Esophagus squamous epithelium (tissue), 5 donors: ENCODE measurements at regions of chr7 and their contacts with region 1.

Region 1: DNA sequence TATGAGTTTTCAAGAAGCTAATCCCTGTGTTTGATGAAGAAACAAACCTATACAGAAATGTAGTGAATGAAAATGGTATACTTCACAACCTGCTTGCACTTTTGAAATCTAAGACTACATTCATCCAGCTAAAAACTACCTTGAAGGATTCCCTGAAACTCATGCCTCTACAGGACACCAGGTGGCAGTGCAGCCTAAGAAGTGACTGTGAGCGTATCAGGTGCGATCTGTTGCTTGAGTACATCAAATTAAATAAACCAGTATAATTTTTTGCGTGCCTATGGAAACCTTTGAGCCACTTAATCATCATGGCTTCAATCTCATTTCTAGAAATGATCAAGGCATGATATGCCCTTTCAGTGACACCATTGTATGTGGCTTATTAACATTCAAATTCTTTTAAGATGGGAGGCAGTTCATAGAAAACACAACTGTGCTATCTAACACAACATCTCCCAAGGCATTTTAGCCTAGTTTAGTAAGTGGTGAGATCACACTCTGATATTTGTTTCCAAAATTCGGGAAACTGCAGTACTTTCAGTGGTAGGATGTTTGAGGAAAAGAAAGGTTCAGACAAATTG is 57.4 kb downstream of the PPP1R17 start:
- DNase-seq: no peak
- H3K4me3 ChIP-seq: no peak overlapping the region
- H3K27ac ChIP-seq: no peak overlapping the region
- H3K4me1 ChIP-seq: no peaks in the 10 kb centered on the region
- H3K27me3 ChIP-seq: peaks cover 0 to 10% (median 0%) of the 10 kb centered on the region in 4 donors
- CTCF ChIP-seq: peak; percentile 71 to 88 (median 84)
- POLR2A ChIP-seq: no peak

Region 2: DNA sequence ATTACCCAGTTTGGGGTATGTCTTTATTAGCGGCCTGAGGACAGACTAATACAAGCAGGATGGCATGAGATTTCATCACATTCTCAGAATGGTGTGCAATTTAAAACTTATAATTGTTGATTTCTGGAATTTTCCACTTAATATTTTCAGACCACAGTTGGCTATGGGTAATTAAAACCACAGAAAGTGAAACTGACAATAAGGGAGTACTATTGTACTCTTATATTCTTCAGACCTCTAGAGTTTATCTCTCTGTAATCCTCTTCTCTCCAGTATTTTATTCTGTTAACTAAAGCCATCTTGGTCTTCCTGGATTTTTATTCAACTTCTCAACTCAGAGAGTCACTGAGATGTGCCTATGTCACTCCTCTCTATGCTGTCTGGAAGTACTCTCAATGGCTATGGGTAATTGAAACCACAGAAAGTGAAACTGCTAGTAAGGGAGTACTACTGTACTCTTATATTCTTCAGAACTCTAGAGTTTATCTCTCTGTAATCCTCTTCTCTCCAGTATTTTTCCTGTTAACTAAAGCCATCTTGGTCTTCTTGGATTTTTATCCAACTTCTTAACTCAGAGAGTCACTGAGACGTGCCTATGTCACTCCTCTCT is 60.9 kb after region 1 on chr7:
- intact Hi-C with region 1: no loop called
- DNase-seq: no peak
- H3K4me3 ChIP-seq: no peak overlapping the region
- H3K27ac ChIP-seq: no peak overlapping the region
- H3K4me1 ChIP-seq: no peaks in the 10 kb centered on the region
- H3K27me3 ChIP-seq: no peaks in the 10 kb centered on the region
- CTCF ChIP-seq: no peak
- POLR2A ChIP-seq: no peak

Region 3: GRCh38 chr7:31919678-31920369 is 175.4 kb after region 1 on chr7:
- intact Hi-C with region 1: no loop called
- DNase-seq: no peak
- H3K4me3 ChIP-seq: no peak overlapping the region
- H3K27ac ChIP-seq: no peak overlapping the region
- H3K4me1 ChIP-seq: no peaks in the 10 kb centered on the region
- H3K27me3 ChIP-seq: no peaks in the 10 kb centered on the region
- CTCF ChIP-seq: no peak
- POLR2A ChIP-seq: no peak

Region 4: GRCh38 chr7:32204361-32205018 is 460.1 kb after region 1 on chr7:
- intact Hi-C with region 1: loop called (anchors 5 kb)
- DNase-seq: no peak
- H3K4me3 ChIP-seq: peak overlapping the region in 3 of 4 donors; percentile 13 to 56 (median 28)
- H3K27ac ChIP-seq: no peak overlapping the region
- H3K4me1 ChIP-seq: peaks cover 0 to 8% (median 0%) of the 10 kb centered on the region in 3 donors
- H3K27me3 ChIP-seq: peaks cover 0 to 5% (median 0%) of the 10 kb centered on the region in 4 donors
- CTCF ChIP-seq: peak; percentile 42 to 87 (median 78)
- POLR2A ChIP-seq: no peak

Region 5: GRCh38 chr7:32347244-32347828 is 603.0 kb after region 1 on chr7:
- intact Hi-C with region 1: loop called (anchors 10 kb)
- DNase-seq: no peak
- H3K4me3 ChIP-seq: no peak overlapping the region
- H3K27ac ChIP-seq: no peak overlapping the region
- H3K4me1 ChIP-seq: no peaks in the 10 kb centered on the region
- H3K27me3 ChIP-seq: no peaks in the 10 kb centered on the region
- CTCF ChIP-seq: peak in 5 of 6 experiments; percentile 37 to 73 (median 55)
- POLR2A ChIP-seq: no peak

Region 6: DNA sequence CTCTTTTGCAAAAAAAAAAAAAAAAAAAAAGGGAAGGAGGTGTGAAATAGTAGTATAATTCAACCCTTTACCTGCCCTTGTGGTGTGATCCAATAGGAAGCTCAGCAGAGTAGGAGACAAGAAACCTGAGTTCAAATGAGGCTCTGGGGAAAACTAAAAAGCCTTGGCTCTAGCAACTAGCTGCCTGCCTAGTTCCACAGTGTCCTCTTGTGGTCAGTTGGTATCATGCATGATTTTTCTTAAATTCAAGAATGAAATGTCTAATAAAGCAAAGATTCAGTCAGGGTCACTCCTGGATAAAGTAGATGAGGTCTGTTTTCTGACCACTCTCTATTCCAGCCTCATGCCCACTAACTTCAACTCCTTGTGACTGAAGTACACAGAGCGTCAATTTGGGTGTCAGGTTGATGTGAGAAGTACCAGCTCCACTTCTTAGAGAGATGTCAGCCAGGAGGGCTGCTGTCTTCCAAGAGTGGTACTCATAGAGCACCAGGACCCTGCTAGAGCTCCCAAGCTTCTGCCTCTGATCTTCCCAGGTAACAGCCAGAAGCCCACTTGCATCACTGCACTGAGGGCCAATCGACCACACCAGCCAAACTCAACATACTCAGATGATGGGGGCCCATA is 735.3 kb after region 1 on chr7:
- intact Hi-C with region 1: loop called (anchors 10 kb)
- DNase-seq: no peak
- H3K4me3 ChIP-seq: no peak overlapping the region
- H3K27ac ChIP-seq: no peak overlapping the region
- H3K4me1 ChIP-seq: no peaks in the 10 kb centered on the region
- H3K27me3 ChIP-seq: no peaks in the 10 kb centered on the region
- CTCF ChIP-seq: peak in 5 of 6 experiments; percentile 37 to 82 (median 46)
- POLR2A ChIP-seq: no peak